ENCODE measurements at regions of chr2 and their contacts with region 1.

Region 1: GRCh38 chr2:156332534-156333273 is at the start of gene NR4A2:
- DNase-seq: no peak
- ATAC-seq: peak; percentile 76
- H3K4me3 ChIP-seq: peak within 1 kb of the TSS; percentile 80
- H3K27ac ChIP-seq: peak within 1 kb of the TSS; percentile 85; the same call in 1 of the 2 replicates
- H3K4me1 ChIP-seq: peaks cover 10% of the 10 kb centered on the region
- H3K27me3 ChIP-seq: peaks cover 2 to 13% of the 10 kb centered on the region in 2 experiments
- CTCF ChIP-seq: no peak
- EP300 ChIP-seq: peak; percentile 8 to 49; a peak in 2 of 4 replicates
- POLR2A ChIP-seq: peak; percentile 60
- RAD21 ChIP-seq: no peak
- polyA plus RNA-seq, gene NR4A2: 0.40 to 0.42 TPM

Region 2: DNA sequence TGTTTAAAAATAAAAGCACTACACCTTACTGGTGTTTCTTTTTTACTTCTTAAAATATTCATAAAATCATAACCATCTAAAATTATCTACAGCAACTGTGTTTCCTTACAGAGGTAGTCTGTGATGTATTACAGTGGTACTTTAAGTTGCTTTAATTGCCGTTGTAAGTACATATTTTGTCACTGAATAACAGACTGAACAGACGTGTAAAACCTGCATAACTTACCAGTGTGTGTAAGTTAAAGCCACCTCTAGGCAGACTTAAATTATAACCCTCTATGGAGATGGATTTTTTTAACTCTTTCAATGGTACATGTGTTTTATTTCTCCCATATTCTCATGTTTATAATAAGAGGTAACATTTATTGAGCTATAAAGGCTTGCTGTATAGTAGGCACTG is 167.0 kb before region 1 on chr2:
- CTCF ChIA-PET with region 1: no interaction called
- POLR2A ChIA-PET with region 1: no interaction called
- RAD21 ChIA-PET with region 1: no interaction called
- SMC1A ChIA-PET with region 1: no interaction called
- in situ Hi-C with region 1: no loop called
- intact Hi-C with region 1: no loop called
- DNase-seq: no peak
- ATAC-seq: no peak
- H3K4me3 ChIP-seq: no peak overlapping the region
- H3K27ac ChIP-seq: no peak overlapping the region
- H3K4me1 ChIP-seq: no peaks in the 10 kb centered on the region
- H3K27me3 ChIP-seq: no peaks in the 10 kb centered on the region
- CTCF ChIP-seq: no peak
- EP300 ChIP-seq: no peak
- POLR2A ChIP-seq: no peak
- RAD21 ChIP-seq: no peak

Region 3: GRCh38 chr2:156294945-156295580 is 37.6 kb before region 1 on chr2:
- CTCF ChIA-PET with region 1: no interaction called
- POLR2A ChIA-PET with region 1: no interaction called
- RAD21 ChIA-PET with region 1: no interaction called
- SMC1A ChIA-PET with region 1: no interaction called
- in situ Hi-C with region 1: no loop called
- intact Hi-C with region 1: no loop called
- DNase-seq: no peak
- ATAC-seq: no peak
- H3K4me3 ChIP-seq: no peak overlapping the region
- H3K27ac ChIP-seq: no peak overlapping the region
- H3K4me1 ChIP-seq: no peaks in the 10 kb centered on the region
- H3K27me3 ChIP-seq: no peaks in the 10 kb centered on the region
- CTCF ChIP-seq: no peak
- EP300 ChIP-seq: no peak
- POLR2A ChIP-seq: no peak
- RAD21 ChIP-seq: no peak

Region 4: GRCh38 chr2:156356014-156356754 is 23.5 kb after region 1 on chr2:
- CTCF ChIA-PET with region 1: interaction called, 3 read pairs
- POLR2A ChIA-PET with region 1: no interaction called
- RAD21 ChIA-PET with region 1: interaction called, 10 read pairs
- SMC1A ChIA-PET with region 1: interaction called, 3 read pairs
- in situ Hi-C with region 1: no loop called
- intact Hi-C with region 1: no loop called
- DNase-seq: no peak
- ATAC-seq: no peak
- H3K4me3 ChIP-seq: no peak overlapping the region
- H3K27ac ChIP-seq: no peak overlapping the region
- H3K4me1 ChIP-seq: no peaks in the 10 kb centered on the region
- H3K27me3 ChIP-seq: no peaks in the 10 kb centered on the region
- CTCF ChIP-seq: no peak
- EP300 ChIP-seq: no peak
- POLR2A ChIP-seq: no peak
- RAD21 ChIP-seq: no peak

Region 5: GRCh38 chr2:156435715-156436496 is 103.2 kb after region 1 on chr2 and contains the start of gene GPD2:
- CTCF ChIA-PET with region 1: interaction called, 25 read pairs
- POLR2A ChIA-PET with region 1: interaction called, 20 read pairs
- RAD21 ChIA-PET with region 1: interaction called, 37 read pairs
- SMC1A ChIA-PET with region 1: interaction called, 36 read pairs
- in situ Hi-C with region 1: no loop called
- intact Hi-C with region 1: loop called (anchors 1 kb)
- DNase-seq: no peak
- ATAC-seq: peak; percentile 77
- H3K4me3 ChIP-seq: peak within 1 kb of the TSS; percentile 68
- H3K27ac ChIP-seq: peak within 1 kb of the TSS; percentile 81
- H3K4me1 ChIP-seq: peaks cover 23% of the 10 kb centered on the region
- H3K27me3 ChIP-seq: no peaks in the 10 kb centered on the region
- CTCF ChIP-seq: no peak
- EP300 ChIP-seq: 0 out of 4 replicates have a peak, but pooled peaks of 1 of the 2 experiments have one; percentile 4
- POLR2A ChIP-seq: peak; percentile 90
- RAD21 ChIP-seq: 0 out of 2 replicates have a peak, but pooled peaks have one; percentile 10
- polyA plus RNA-seq, gene GPD2: 10.0 to 10.5 TPM

Region 6: DNA sequence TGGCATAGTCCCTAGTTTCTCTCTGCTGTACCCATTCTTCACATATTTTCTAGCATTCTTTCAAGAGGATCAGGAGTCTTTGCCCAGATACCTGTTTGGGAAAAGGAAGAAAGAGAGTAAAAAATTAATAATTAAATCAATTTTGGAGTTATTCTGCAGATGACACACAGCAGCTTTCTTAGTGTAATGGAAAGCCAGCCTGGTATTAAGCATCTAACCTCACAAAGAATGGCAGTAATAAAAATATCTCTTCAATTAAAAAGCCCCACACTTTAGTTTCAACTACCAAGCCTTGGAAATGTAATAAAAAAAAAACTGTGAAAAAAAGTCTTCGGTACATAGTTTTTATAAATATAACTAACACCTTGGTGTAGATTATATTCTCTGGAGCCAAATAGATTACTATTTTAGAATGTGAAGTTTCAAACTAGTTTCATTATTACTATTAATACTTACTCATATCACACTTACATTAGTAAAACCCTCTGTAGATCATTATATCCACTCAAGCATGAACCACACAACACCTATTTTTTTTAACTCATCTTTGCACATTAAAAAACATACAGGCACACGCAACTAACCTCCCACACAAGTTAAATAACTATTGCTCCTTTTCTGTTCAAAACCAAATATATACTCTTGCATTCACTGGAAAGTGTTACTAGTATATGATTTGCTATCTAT is 194.4 kb after region 1 on chr2:
- CTCF ChIA-PET with region 1: interaction called, 4 read pairs
- POLR2A ChIA-PET with region 1: interaction called, 4 read pairs
- RAD21 ChIA-PET with region 1: interaction called, 8 read pairs
- SMC1A ChIA-PET with region 1: interaction called, 14 read pairs
- in situ Hi-C with region 1: no loop called
- intact Hi-C with region 1: no loop called
- DNase-seq: no peak
- ATAC-seq: peak; percentile 94
- H3K4me3 ChIP-seq: no peak overlapping the region
- H3K27ac ChIP-seq: peak overlapping the region; percentile 81
- H3K4me1 ChIP-seq: peaks cover 16% of the 10 kb centered on the region
- H3K27me3 ChIP-seq: no peaks in the 10 kb centered on the region
- CTCF ChIP-seq: no peak
- EP300 ChIP-seq: peak; percentile 96 to 99
- POLR2A ChIP-seq: no peak
- RAD21 ChIP-seq: no peak

Region 7: GRCh38 chr2:156573710-156574109 is 241.0 kb after region 1 on chr2:
- CTCF ChIA-PET with region 1: interaction called, 7 read pairs
- POLR2A ChIA-PET with region 1: interaction called, 4 read pairs
- RAD21 ChIA-PET with region 1: interaction called, 22 read pairs
- SMC1A ChIA-PET with region 1: interaction called, 16 read pairs
- in situ Hi-C with region 1: loop called (anchors 25 kb)
- intact Hi-C with region 1: no loop called
- DNase-seq: no peak
- ATAC-seq: peak; percentile 85
- H3K4me3 ChIP-seq: no peak overlapping the region
- H3K27ac ChIP-seq: peak overlapping the region; percentile 18; the same call in 1 of the 2 replicates
- H3K4me1 ChIP-seq: peaks cover 10% of the 10 kb centered on the region; the same call in 1 of the 2 replicates
- H3K27me3 ChIP-seq: no peaks in the 10 kb centered on the region
- CTCF ChIP-seq: no peak
- EP300 ChIP-seq: no peak
- POLR2A ChIP-seq: no peak
- RAD21 ChIP-seq: no peak

Region 8: GRCh38 chr2:157061799-157062198 is 729.1 kb after region 1 on chr2:
- CTCF ChIA-PET with region 1: no interaction called
- POLR2A ChIA-PET with region 1: no interaction called
- RAD21 ChIA-PET with region 1: interaction called, 6 read pairs
- SMC1A ChIA-PET with region 1: interaction called, 3 read pairs
- in situ Hi-C with region 1: no loop called
- intact Hi-C with region 1: loop called (anchors 5 kb)
- DNase-seq: peak; percentile 51
- ATAC-seq: peak; percentile 89
- H3K4me3 ChIP-seq: no peak overlapping the region
- H3K27ac ChIP-seq: no peak overlapping the region
- H3K4me1 ChIP-seq: peaks cover 8% of the 10 kb centered on the region; the same call in 1 of the 2 replicates
- H3K27me3 ChIP-seq: peaks cover 0 to 2% of the 10 kb centered on the region in 2 experiments; a peak in 2 of 4 replicates
- CTCF ChIP-seq: no peak
- EP300 ChIP-seq: peak in 1 of 2 experiments; percentile 71; a peak in 2 of 4 replicates
- POLR2A ChIP-seq: no peak
- RAD21 ChIP-seq: no peak